Activated B cell treated with CpG ODN at 0.5 μM for 24 hours (primary cell): ENCODE measurements at regions of chr21 and their contacts with region 1.

Region 1: GRCh38 chr21:18666725-18667124 is 263.1 kb upstream of the TMPRSS15 start:
- DNase-seq: no peak
- ATAC-seq: no peak
- H3K4me3 Mint-ChIP-seq: no peak overlapping the region
- H3K27ac Mint-ChIP-seq: no peak overlapping the region
- H3K4me1 Mint-ChIP-seq: no peaks in the 10 kb centered on the region
- H3K27me3 Mint-ChIP-seq: no peaks in the 10 kb centered on the region
- CTCF ChIP-seq: no peak

Region 2: DNA sequence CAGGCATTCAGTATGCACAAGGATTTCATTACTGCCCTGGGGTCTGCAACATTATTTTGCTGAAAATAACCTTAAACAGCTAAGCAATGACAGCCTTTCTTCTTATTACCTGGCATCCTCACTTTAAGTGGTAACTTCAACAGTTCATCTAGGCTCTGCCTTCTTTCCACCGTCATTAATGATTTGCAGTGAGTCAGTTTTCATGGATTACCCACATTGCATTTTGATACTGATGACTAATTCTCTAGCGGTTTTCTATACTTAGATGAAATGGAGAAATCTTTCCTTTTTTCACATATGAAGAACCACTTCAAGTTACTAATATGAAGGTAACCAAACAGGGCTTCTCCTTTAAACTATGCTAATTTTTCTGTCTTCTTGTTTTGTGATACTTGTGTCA is 36.3 kb before region 1 on chr21:
- CTCF ChIA-PET with region 1: no interaction called
- POLR2A ChIA-PET with region 1: no interaction called
- intact Hi-C with region 1: no loop called
- DNase-seq: no peak
- ATAC-seq: no peak
- H3K4me3 Mint-ChIP-seq: no peak overlapping the region
- H3K27ac Mint-ChIP-seq: no peak overlapping the region
- H3K4me1 Mint-ChIP-seq: peaks cover 5% of the 10 kb centered on the region
- H3K27me3 Mint-ChIP-seq: no peaks in the 10 kb centered on the region
- CTCF ChIP-seq: no peak

Region 3: DNA sequence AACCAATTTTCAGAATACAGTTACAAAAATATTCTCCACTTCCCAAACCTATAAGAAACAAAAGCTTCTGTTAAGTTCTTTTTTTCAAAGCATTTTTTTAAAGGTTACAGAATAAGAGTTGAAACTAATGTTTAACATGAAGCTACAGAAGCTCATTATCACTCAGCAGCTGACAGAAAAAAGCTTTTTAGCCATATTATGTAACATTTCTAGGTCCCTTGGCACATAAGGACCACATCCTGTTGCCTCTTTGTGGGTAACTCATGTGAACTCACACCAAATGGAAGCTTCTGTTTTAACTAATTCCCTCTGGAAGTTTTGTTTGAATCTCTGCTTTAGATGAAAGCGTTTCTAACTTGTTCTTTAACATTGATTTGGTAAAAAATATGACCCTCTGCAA is 20.6 kb before region 1 on chr21:
- CTCF ChIA-PET with region 1: no interaction called
- POLR2A ChIA-PET with region 1: no interaction called
- intact Hi-C with region 1: loop called (anchors 2 kb)
- DNase-seq: no peak
- ATAC-seq: no peak
- H3K4me3 Mint-ChIP-seq: no peak overlapping the region
- H3K27ac Mint-ChIP-seq: no peak overlapping the region
- H3K4me1 Mint-ChIP-seq: no peaks in the 10 kb centered on the region
- H3K27me3 Mint-ChIP-seq: no peaks in the 10 kb centered on the region
- CTCF ChIP-seq: no peak

Region 4: DNA sequence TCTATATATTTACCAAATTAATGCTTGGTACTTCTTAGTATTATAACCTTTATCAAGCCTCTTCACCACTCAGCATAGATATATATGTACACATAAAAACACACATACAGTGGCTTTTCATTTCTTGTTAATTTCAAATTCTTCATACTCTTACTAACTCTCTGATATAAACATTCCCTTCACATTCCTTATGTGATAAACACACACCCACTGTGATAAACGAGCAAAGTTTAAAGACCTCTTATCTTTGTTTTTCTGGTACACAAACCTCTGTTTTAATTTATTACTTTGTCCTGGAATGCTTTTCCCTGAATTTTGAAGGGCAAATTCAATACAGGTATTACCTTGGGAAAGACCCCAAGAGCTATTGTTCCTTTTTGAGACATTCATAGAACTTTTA is 116.0 kb after region 1 on chr21:
- CTCF ChIA-PET with region 1: no interaction called
- POLR2A ChIA-PET with region 1: no interaction called
- intact Hi-C with region 1: no loop called
- DNase-seq: no peak
- ATAC-seq: no peak
- H3K4me3 Mint-ChIP-seq: no peak overlapping the region
- H3K27ac Mint-ChIP-seq: no peak overlapping the region
- H3K4me1 Mint-ChIP-seq: no peaks in the 10 kb centered on the region
- H3K27me3 Mint-ChIP-seq: no peaks in the 10 kb centered on the region
- CTCF ChIP-seq: no peak